ENCODE measurements at regions of chr10 and their contacts with region 1.

Region 1: GRCh38 chr10:86755740-86756510 is 494 bp upstream of the BMPR1A start:
- DNase-seq: peak; percentile 91
- H3K4me3 Mint-ChIP-seq: peak overlapping the region; percentile 78
- H3K27ac Mint-ChIP-seq: peak overlapping the region; percentile 33
- H3K4me1 Mint-ChIP-seq: peaks cover 38% of the 10 kb centered on the region
- H3K27me3 Mint-ChIP-seq: peaks cover 1% of the 10 kb centered on the region

Region 2: GRCh38 chr10:86710987-86711512 is 44.9 kb before region 1 on chr10:
- CTCF ChIA-PET with region 1: interaction called, 10 read pairs
- POLR2A ChIA-PET with region 1: interaction called, 6 read pairs
- intact Hi-C with region 1: loop called (anchors 1 kb)
- DNase-seq: peak; percentile 89
- H3K4me3 Mint-ChIP-seq: peak overlapping the region; percentile 75
- H3K27ac Mint-ChIP-seq: peak overlapping the region; percentile 89
- H3K4me1 Mint-ChIP-seq: peaks cover 11% of the 10 kb centered on the region
- H3K27me3 Mint-ChIP-seq: no peaks in the 10 kb centered on the region

Region 3: DNA sequence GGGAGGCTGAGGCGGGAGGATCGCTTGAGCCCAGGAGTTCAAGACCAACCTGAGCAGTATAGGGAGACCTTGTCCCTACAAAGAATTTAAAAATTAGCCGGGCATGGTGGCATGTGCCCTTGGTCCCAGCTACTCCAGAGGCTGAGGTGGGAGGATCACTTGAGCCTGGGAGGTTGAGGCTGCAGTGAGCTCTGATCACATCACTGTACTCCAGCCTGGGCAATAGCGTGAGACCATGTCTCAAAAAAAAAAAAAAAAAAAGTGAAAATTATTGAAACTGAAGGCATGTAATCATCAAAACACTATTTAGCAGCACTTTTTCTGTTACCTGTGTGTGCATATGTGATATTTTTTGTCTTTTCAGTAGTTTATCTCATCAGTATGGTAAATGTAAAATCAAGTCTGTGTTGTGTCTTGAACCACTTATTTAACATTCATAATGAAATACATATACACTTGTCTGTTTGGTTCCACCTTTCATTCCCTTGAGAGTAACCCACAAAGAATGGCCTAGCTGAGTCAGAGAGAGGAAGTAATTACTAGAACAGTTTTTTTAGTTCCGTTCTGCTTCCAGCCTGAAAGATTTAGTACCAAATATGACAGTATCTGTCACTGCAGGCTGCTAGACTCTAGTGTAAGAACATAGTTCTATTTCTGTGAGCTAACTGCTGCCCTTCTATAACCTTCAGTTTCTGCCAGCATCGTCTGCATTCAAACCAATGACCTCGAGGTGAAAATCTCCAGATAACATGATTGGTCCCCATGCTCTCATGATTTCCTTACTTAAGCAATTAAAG is 132.9 kb after region 1 on chr10:
- CTCF ChIA-PET with region 1: no interaction called
- POLR2A ChIA-PET with region 1: no interaction called
- intact Hi-C with region 1: loop called (anchors 5 kb)
- DNase-seq: no peak
- H3K4me3 Mint-ChIP-seq: no peak overlapping the region
- H3K27ac Mint-ChIP-seq: peak overlapping the region; percentile 28
- H3K4me1 Mint-ChIP-seq: peaks cover 10% of the 10 kb centered on the region
- H3K27me3 Mint-ChIP-seq: no peaks in the 10 kb centered on the region